Posterior cingulate gyrus (tissue), 11 donors: ENCODE measurements at regions of chr14 and their contacts with region 1.

Region 1: GRCh38 chr14:52950898-52951689 is at the start of gene FERMT2:
- DNase-seq: peak; percentile 79 to 97 (median 88)

Region 2: GRCh38 chr14:53055003-53055402 is 103.9 kb after region 1 on chr14:
- intact Hi-C with region 1: loop called (anchors 2 kb)
- DNase-seq: no peak

Region 3: GRCh38 chr14:53128303-53129028 is 177.4 kb after region 1 on chr14:
- intact Hi-C with region 1: no loop called
- DNase-seq: no peak

Region 4: GRCh38 chr14:53152890-53153701 is 202.0 kb after region 1 on chr14 and contains the start of gene DDHD1:
- intact Hi-C with region 1: loop called (anchors 1 kb)
- DNase-seq: peak; percentile 63 to 97 (median 74)

Region 5: GRCh38 chr14:53306267-53306721 is 355.2 kb after region 1 on chr14:
- intact Hi-C with region 1: loop called (anchors 2 kb)
- DNase-seq: peak; percentile 43 to 93 (median 63)